Left ventricle myocardium inferior (tissue), 1 donor: ENCODE measurements at regions of chr4 and their contacts with region 1.

Region 1: GRCh38 chr4:181528570-181529184 is 714.5 kb upstream of the TENM3 start:
- DNase-seq: peak; percentile 37
- H3K4me3 ChIP-seq: no peak overlapping the region
- H3K27ac ChIP-seq: no peak overlapping the region
- H3K4me1 ChIP-seq: no peaks in the 10 kb centered on the region
- H3K27me3 ChIP-seq: peaks cover 11% of the 10 kb centered on the region
- CTCF ChIP-seq: peak; percentile 81

Region 2: GRCh38 chr4:181143250-181143854 is 385.3 kb before region 1 on chr4:
- intact Hi-C with region 1: loop called (anchors 5 kb)
- DNase-seq: peak; percentile 64
- H3K4me3 ChIP-seq: no peak overlapping the region
- H3K27ac ChIP-seq: no peak overlapping the region
- H3K4me1 ChIP-seq: no peaks in the 10 kb centered on the region
- H3K27me3 ChIP-seq: peaks cover 53% of the 10 kb centered on the region
- CTCF ChIP-seq: peak; percentile 90

Region 3: DNA sequence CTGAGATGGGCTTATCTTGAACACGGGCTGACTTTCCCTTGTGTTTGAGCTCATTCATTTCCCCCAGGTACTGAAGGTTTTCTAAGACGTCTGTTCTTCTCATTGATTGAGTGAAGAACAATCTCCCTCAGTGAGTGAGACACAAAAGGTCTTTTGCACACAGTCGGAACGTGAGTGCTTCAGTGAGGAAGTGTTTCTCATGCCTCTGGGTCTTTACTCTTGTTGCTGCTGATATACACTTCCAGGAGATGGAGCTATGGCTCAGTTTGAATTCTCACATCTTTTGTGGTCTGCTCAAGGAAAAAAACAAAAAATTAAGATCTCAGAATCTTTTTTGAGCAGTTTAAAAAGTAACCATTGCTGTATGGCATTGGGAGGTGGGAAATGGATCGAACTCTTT is 267.4 kb before region 1 on chr4:
- intact Hi-C with region 1: loop called (anchors 5 kb)
- DNase-seq: no peak
- H3K4me3 ChIP-seq: no peak overlapping the region
- H3K27ac ChIP-seq: no peak overlapping the region
- H3K4me1 ChIP-seq: no peaks in the 10 kb centered on the region
- H3K27me3 ChIP-seq: no peaks in the 10 kb centered on the region
- CTCF ChIP-seq: peak; percentile 54

Region 4: DNA sequence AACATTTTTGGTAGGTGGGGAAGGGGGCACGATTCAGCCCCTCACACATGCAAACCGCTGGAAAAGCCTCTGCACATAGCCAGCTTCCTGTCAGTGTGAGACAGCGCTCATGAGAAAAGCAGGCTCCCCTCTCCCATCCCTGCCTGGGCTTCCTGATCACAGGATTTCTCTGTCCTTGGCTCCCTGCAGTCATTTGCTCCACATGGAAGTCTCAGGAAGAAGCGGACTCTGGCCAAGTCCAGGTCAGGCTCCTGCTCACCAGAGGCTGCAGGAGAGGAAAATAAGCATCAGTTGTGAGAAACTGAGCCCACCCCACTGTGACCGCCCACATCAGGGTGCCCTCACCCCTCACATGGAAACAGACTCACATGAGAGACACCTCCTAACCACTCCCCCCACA is 50.2 kb after region 1 on chr4:
- intact Hi-C with region 1: no loop called
- DNase-seq: no peak
- H3K4me3 ChIP-seq: no peak overlapping the region
- H3K27ac ChIP-seq: no peak overlapping the region
- H3K4me1 ChIP-seq: no peaks in the 10 kb centered on the region
- H3K27me3 ChIP-seq: no peaks in the 10 kb centered on the region
- CTCF ChIP-seq: no peak